ENCODE measurements at regions of chr12 and their contacts with region 1.

Region 1: GRCh38 chr12:12645485-12645884 is 33.8 kb downstream of the CREBL2 start:
- DNase-seq: peak; percentile 45
- ATAC-seq: peak; percentile 82
- H3K4me3 Mint-ChIP-seq: no peak overlapping the region
- H3K27ac Mint-ChIP-seq: peak overlapping the region; percentile 69
- H3K4me1 Mint-ChIP-seq: peaks cover 17% of the 10 kb centered on the region
- H3K27me3 Mint-ChIP-seq: no peaks in the 10 kb centered on the region
- CTCF ChIP-seq: peak; percentile 80

Region 2: GRCh38 chr12:12350868-12351463 is 294.5 kb before region 1 on chr12:
- CTCF ChIA-PET with region 1: no interaction called
- POLR2A ChIA-PET with region 1: no interaction called
- intact Hi-C with region 1: no loop called
- DNase-seq: no peak
- ATAC-seq: peak; percentile 8
- H3K4me3 Mint-ChIP-seq: peak overlapping the region; percentile 68
- H3K27ac Mint-ChIP-seq: no peak overlapping the region
- H3K4me1 Mint-ChIP-seq: peaks cover 21% of the 10 kb centered on the region
- H3K27me3 Mint-ChIP-seq: no peaks in the 10 kb centered on the region
- CTCF ChIP-seq: no peak

Region 3: DNA sequence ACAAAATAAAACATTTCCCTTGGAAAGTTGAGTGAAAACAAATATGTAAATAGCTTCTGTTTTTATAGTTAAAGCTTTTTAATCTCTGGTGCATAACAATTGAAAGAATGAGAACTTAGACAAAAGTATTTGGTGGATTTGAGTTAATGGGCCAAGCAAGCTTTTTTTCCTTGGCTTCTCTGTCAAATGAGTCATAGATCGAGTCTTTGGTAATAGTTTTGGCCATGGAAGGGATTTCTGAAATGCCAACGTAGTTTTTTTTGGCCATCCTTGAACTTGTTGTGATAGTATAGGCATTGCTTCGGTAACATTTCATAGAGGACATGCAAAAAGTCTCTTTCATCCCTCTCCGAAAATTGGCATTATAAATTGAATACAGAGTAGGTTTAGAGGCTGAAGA is 15.6 kb after region 1 on chr12:
- CTCF ChIA-PET with region 1: interaction called, 50 read pairs
- POLR2A ChIA-PET with region 1: interaction called, 3 read pairs
- intact Hi-C with region 1: no loop called
- DNase-seq: no peak
- ATAC-seq: no peak
- H3K4me3 Mint-ChIP-seq: no peak overlapping the region
- H3K27ac Mint-ChIP-seq: no peak overlapping the region
- H3K4me1 Mint-ChIP-seq: peaks cover under 1% of the 10 kb centered on the region
- H3K27me3 Mint-ChIP-seq: no peaks in the 10 kb centered on the region
- CTCF ChIP-seq: no peak

Measured in activated CD8-positive, alpha-beta T cell treated with anti-CD3 and anti-CD28 coated beads for 36 hours (primary cell).